Panc1 (cell line): ENCODE measurements at regions of chr11 and their contacts with region 1.

Region 1: GRCh38 chr11:6443269-6444003 is 2.6 kb upstream of the HPX start:
- DNase-seq: peak; percentile 41
- ATAC-seq: peak; percentile 85
- H3K4me3 ChIP-seq: no peak overlapping the region
- H3K27ac ChIP-seq: no peak overlapping the region
- H3K4me1 ChIP-seq: no peaks in the 10 kb centered on the region
- H3K27me3 ChIP-seq: no peaks in the 10 kb centered on the region
- CTCF ChIP-seq: peak; percentile 96

Region 2: GRCh38 chr11:6405846-6406245 is 37.6 kb before region 1 on chr11:
- CTCF ChIA-PET with region 1: interaction called, 13 read pairs
- POLR2A ChIA-PET with region 1: no interaction called
- in situ Hi-C with region 1: no loop called
- intact Hi-C with region 1: no loop called
- DNase-seq: no peak
- ATAC-seq: no peak; the same call in 1 of the 2 replicates
- H3K4me3 ChIP-seq: no peak overlapping the region
- H3K27ac ChIP-seq: no peak overlapping the region
- H3K4me1 ChIP-seq: no peaks in the 10 kb centered on the region
- H3K27me3 ChIP-seq: no peaks in the 10 kb centered on the region
- CTCF ChIP-seq: no peak

Region 3: GRCh38 chr11:6505577-6506240 is 62.3 kb after region 1 on chr11:
- CTCF ChIA-PET with region 1: no interaction called
- POLR2A ChIA-PET with region 1: no interaction called
- in situ Hi-C with region 1: no loop called
- intact Hi-C with region 1: loop called (anchors 5 kb)
- DNase-seq: peak; percentile 64
- ATAC-seq: peak; percentile 88
- H3K4me3 ChIP-seq: no peak overlapping the region
- H3K27ac ChIP-seq: no peak overlapping the region
- H3K4me1 ChIP-seq: no peaks in the 10 kb centered on the region
- H3K27me3 ChIP-seq: no peaks in the 10 kb centered on the region
- CTCF ChIP-seq: peak; percentile 91

Region 4: GRCh38 chr11:6554828-6555706 is 111.6 kb after region 1 on chr11:
- CTCF ChIA-PET with region 1: no interaction called
- POLR2A ChIA-PET with region 1: interaction called, 13 read pairs
- in situ Hi-C with region 1: no loop called
- intact Hi-C with region 1: no loop called
- DNase-seq: no peak
- ATAC-seq: no peak
- H3K4me3 ChIP-seq: no peak overlapping the region
- H3K27ac ChIP-seq: no peak overlapping the region
- H3K4me1 ChIP-seq: no peaks in the 10 kb centered on the region
- H3K27me3 ChIP-seq: no peaks in the 10 kb centered on the region
- CTCF ChIP-seq: no peak

Region 5: DNA sequence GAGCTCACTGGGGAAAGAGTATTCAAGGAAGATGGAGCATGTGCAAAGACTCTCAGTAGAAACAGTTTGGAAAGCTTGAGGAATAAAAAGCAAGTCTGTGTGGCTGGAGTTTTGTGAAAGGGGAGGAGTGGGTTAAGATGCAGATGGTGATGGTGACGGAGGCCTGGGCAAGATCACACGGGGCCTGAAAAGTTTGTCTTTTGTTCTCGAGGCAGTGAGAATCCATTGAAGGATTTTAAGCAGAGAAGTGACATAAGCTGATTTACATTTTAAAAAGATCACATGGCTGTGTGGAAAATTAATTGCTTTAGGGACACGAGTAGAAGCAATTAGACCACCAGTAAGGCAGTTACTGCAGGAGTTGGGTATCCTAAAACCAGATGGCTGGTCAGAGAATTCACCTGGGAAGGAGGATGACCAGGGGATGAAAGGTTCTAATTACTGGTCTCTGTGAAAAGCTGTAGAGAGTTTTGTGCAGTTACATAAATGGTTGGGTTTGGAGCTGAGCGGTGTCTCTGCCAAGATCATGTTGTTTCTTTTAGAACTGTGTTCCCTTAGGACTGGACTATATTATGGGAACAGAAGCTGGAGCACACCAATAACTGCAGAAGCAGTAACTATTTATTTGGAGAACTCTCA is 152.9 kb after region 1 on chr11:
- CTCF ChIA-PET with region 1: no interaction called
- POLR2A ChIA-PET with region 1: no interaction called
- in situ Hi-C with region 1: no loop called
- intact Hi-C with region 1: no loop called
- DNase-seq: no peak
- ATAC-seq: no peak
- H3K4me3 ChIP-seq: no peak overlapping the region
- H3K27ac ChIP-seq: no peak overlapping the region
- H3K4me1 ChIP-seq: no peaks in the 10 kb centered on the region
- H3K27me3 ChIP-seq: no peaks in the 10 kb centered on the region
- CTCF ChIP-seq: no peak